T-cell (primary cell): ENCODE measurements at regions of chr4 and their contacts with region 1.

Region 1: GRCh38 chr4:98995183-98996055 is at the start of gene METAP1:
- DNase-seq: peak; percentile 90 to 99 (median 97)
- ATAC-seq: peak; percentile 88 to 89 (median 88)
- H3K4me3 ChIP-seq: peak within 1 kb of the TSS; percentile 69 to 97
- H3K4me3 Mint-ChIP-seq: peak within 1 kb of the TSS; percentile 82 to 87 (median 86)
- H3K27ac ChIP-seq: peak within 1 kb of the TSS; percentile 93
- H3K27ac Mint-ChIP-seq: peak within 1 kb of the TSS; percentile 99
- H3K4me1 ChIP-seq: peaks cover 12 to 16% of the 10 kb centered on the region in 2 experiments
- H3K4me1 Mint-ChIP-seq: peaks cover 39 to 49% (median 44%) of the 10 kb centered on the region in 3 donors
- H3K27me3 ChIP-seq: no peaks in the 10 kb centered on the region
- H3K27me3 Mint-ChIP-seq: no peaks in the 10 kb centered on the region
- total RNA-seq, gene METAP1: 32.9 to 39.8 (median 39.2) TPM

Region 2: DNA sequence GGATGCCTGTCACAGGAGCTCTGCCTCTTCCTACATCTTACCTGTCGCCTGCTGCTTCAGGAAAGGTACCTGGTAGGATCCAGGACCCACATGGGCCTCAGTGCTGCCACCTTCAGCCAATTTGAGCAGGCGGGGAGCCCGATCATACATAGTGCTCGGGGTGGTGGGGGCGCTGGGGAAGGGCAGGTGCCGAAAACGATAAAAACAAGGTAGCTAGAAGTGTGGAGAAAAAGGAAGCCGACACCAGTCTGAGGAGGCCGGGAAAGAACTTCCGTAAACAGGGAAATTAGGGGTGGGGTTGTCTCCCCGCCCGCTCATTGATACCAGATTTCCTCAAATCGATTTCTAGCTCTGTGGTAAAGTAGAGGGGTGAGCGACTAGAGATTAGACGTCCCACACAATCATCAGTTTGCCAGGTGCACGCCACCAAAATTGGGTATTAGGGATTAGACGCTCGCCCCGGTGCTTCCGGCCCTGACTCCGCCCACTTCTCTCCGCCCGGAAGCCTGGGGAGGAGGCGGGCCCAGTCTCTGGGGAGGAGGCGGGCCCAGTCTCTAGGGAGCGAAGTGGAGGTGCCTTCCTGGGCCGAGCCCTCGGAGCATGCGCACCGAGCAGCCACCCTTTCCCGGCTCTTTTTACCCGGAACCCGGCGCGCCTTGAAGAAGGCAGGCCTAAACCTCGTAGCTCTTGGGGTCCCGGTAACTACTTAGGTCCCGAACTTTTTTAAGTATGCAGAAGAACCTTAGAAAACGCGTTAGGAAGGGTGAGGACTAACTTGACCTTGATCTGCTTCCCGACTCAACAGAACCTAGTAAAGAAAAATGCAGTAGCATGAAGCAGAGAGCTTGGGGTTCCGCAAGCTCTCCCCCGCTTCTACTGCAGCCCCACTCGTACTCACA is 852.2 kb before region 1 on chr4 and contains the start of gene STPG2:
- CTCF ChIA-PET with region 1: interaction called in 1 of 2 experiments, 17 read pairs
- POLR2A ChIA-PET with region 1: no interaction called
- DNase-seq: peak; percentile 82 to 96 (median 90)
- ATAC-seq: peak; percentile 98 to 100 (median 99)
- H3K4me3 ChIP-seq: peak within 1 kb of the TSS; percentile 62 to 67
- H3K4me3 Mint-ChIP-seq: peak within 1 kb of the TSS; percentile 89 to 95 (median 93)
- H3K27ac ChIP-seq: peak within 1 kb of the TSS; percentile 83
- H3K27ac Mint-ChIP-seq: peak within 1 kb of the TSS; percentile 98 to 99
- H3K4me1 ChIP-seq: peaks cover 5 to 12% of the 10 kb centered on the region in 2 experiments
- H3K4me1 Mint-ChIP-seq: peaks cover 21 to 26% (median 22%) of the 10 kb centered on the region in 3 donors
- H3K27me3 ChIP-seq: no peaks in the 10 kb centered on the region
- H3K27me3 Mint-ChIP-seq: no peaks in the 10 kb centered on the region
- total RNA-seq, gene STPG2: 0.19 to 0.35 (median 0.26) TPM in 3 of 5 donors, not detected in the others

Region 3: DNA sequence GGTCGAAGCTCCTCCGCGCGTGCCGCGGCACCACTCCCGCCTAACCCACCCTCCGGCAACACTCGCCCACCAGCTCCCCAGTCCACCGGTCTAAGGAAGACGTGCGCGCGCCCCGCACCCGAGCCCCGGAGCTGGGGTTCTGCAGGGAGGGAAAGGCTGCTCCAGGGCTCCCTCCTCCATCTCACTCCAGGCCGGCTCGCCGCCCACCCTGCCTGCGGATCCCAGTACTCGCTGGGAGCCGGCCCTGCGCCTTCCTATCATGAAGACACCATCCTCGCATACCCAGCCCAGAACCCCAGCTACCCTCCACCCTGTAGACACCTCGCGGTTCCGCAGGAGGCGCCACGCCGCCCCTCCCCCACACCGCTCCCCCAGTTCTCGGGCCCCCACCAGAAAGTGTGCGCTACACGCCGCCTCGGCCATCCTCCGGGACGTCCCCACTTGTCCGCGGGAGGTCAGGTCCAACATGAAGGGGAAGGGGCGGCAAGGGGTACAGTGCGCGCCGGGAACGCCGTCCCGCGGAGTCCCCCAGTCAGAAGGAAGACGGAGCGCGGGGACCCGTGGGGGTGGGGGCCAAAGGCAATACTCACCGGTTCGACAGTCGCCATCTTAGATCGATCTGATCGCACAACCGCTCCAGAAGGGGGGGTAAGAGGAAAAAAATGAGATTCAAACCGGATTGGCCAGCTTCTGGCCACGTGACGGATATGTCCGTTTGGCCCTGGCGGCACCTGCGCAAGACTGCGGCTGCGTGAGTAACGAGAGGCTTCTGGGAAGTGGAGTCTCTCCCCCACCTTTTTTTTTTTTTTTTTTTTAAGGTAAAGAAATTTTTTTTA is 66.7 kb before region 1 on chr4 and contains the start of gene EIF4E:
- CTCF ChIA-PET with region 1: interaction called, 3 to 46 read pairs
- POLR2A ChIA-PET with region 1: interaction called in 1 of 2 experiments, 10 read pairs
- DNase-seq: peak; percentile 84 to 99 (median 97)
- ATAC-seq: peak; percentile 85 to 88 (median 86)
- H3K4me3 ChIP-seq: peak within 1 kb of the TSS; percentile 92 to 96
- H3K4me3 Mint-ChIP-seq: peak within 1 kb of the TSS; percentile 94 to 99 (median 99)
- H3K27ac ChIP-seq: peak within 1 kb of the TSS; percentile 84
- H3K27ac Mint-ChIP-seq: peak within 1 kb of the TSS; percentile 92 to 97
- H3K4me1 ChIP-seq: peaks cover 11 to 20% of the 10 kb centered on the region in 2 experiments
- H3K4me1 Mint-ChIP-seq: peaks cover 27 to 50% (median 41%) of the 10 kb centered on the region in 3 donors
- H3K27me3 ChIP-seq: no peaks in the 10 kb centered on the region
- H3K27me3 Mint-ChIP-seq: no peaks in the 10 kb centered on the region
- total RNA-seq, gene EIF4E: 39.4 to 60.6 (median 56.4) TPM

Region 4: GRCh38 chr4:99043346-99043745 is 47.9 kb after region 1 on chr4:
- CTCF ChIA-PET with region 1: interaction called, 5 to 27 read pairs
- POLR2A ChIA-PET with region 1: interaction called, 3 read pairs
- DNase-seq: peak in 5 of 35 experiments; percentile 6 to 66 (median 12)
- ATAC-seq: peak; percentile 83 to 98 (median 94)
- H3K4me3 ChIP-seq: no peak overlapping the region
- H3K4me3 Mint-ChIP-seq: peak overlapping the region in 2 of 3 donors; percentile 37 to 41
- H3K27ac ChIP-seq: peak overlapping the region; percentile 82
- H3K27ac Mint-ChIP-seq: peak overlapping the region; percentile 86 to 89
- H3K4me1 ChIP-seq: peaks cover 6 to 13% of the 10 kb centered on the region in 2 experiments
- H3K4me1 Mint-ChIP-seq: peaks cover 20 to 25% (median 20%) of the 10 kb centered on the region in 3 donors
- H3K27me3 ChIP-seq: no peaks in the 10 kb centered on the region
- H3K27me3 Mint-ChIP-seq: no peaks in the 10 kb centered on the region

Region 5: GRCh38 chr4:99088481-99089365 is 93.3 kb after region 1 on chr4 and contains the start of gene ADH5:
- CTCF ChIA-PET with region 1: interaction called, 5 to 14 read pairs
- POLR2A ChIA-PET with region 1: interaction called, 4 to 5 read pairs
- DNase-seq: peak; percentile 77 to 94 (median 88)
- ATAC-seq: peak; percentile 93 to 99 (median 96)
- H3K4me3 ChIP-seq: peak within 1 kb of the TSS; percentile 92 to 93
- H3K4me3 Mint-ChIP-seq: peak within 1 kb of the TSS; percentile 97 to 99 (median 97)
- H3K27ac ChIP-seq: peak within 1 kb of the TSS; percentile 89
- H3K27ac Mint-ChIP-seq: peak within 1 kb of the TSS; percentile 99 to 100
- H3K4me1 ChIP-seq: peaks cover 15 to 30% of the 10 kb centered on the region in 2 experiments
- H3K4me1 Mint-ChIP-seq: peaks cover 54 to 67% (median 61%) of the 10 kb centered on the region in 3 donors
- H3K27me3 ChIP-seq: no peaks in the 10 kb centered on the region
- H3K27me3 Mint-ChIP-seq: no peaks in the 10 kb centered on the region
- total RNA-seq, gene ADH5: 51.1 to 80.6 (median 70.5) TPM

Region 6: GRCh38 chr4:99159699-99160098 is 164.3 kb after region 1 on chr4:
- CTCF ChIA-PET with region 1: no interaction called
- POLR2A ChIA-PET with region 1: no interaction called
- DNase-seq: no peak
- ATAC-seq: no peak
- H3K4me3 ChIP-seq: no peak overlapping the region
- H3K4me3 Mint-ChIP-seq: no peak overlapping the region
- H3K27ac ChIP-seq: no peak overlapping the region
- H3K27ac Mint-ChIP-seq: no peak overlapping the region
- H3K4me1 ChIP-seq: no peaks in the 10 kb centered on the region
- H3K4me1 Mint-ChIP-seq: no peaks in the 10 kb centered on the region
- H3K27me3 ChIP-seq: no peaks in the 10 kb centered on the region
- H3K27me3 Mint-ChIP-seq: peaks cover 0 to 8% of the 10 kb centered on the region in 2 donors

Region 7: GRCh38 chr4:100017637-100018310 is 1022.4 kb after region 1 on chr4:
- CTCF ChIA-PET with region 1: no interaction called
- POLR2A ChIA-PET with region 1: no interaction called
- DNase-seq: no peak
- ATAC-seq: no peak
- H3K4me3 ChIP-seq: no peak overlapping the region
- H3K4me3 Mint-ChIP-seq: no peak overlapping the region
- H3K27ac ChIP-seq: no peak overlapping the region
- H3K27ac Mint-ChIP-seq: no peak overlapping the region
- H3K4me1 ChIP-seq: no peaks in the 10 kb centered on the region
- H3K4me1 Mint-ChIP-seq: no peaks in the 10 kb centered on the region
- H3K27me3 ChIP-seq: peaks cover 0 to 5% of the 10 kb centered on the region in 2 experiments
- H3K27me3 Mint-ChIP-seq: peaks cover 8 to 14% of the 10 kb centered on the region in 2 donors